ENCODE measurements at regions of chr6 and their contacts with region 1.

Region 1: DNA sequence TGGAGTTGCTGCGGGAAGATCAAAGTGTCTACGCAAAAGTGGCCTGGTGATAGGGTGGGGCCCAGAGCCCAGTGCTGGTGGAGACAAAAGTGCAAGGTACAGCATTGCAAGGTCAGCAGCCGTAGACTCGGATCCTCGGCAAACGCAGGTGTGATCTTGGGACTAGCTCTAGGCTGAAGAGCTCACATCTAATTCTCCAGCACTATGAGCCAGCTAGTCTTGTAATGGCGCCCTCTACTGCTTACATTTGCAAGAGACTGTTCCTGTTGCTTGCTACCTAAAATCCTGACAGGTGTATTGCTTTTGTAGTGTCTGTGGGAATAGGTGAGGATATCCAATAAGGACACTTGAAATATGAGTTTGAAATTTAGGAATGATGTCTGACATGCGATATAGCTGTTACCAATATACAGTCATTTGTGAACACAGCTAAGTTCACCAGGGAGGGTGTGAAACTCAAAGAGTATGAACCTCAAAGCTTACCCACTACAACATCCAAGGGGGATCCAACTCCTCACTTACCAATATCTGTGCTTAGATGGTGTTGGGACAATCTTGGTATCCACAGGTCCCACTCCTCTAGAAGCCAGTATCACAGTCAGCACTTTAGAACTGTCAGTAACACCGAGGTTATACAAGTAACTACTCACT is 58.4 kb downstream of the PDE7B start:
- DNase-seq: peak; percentile 57 to 73 (median 71)
- H3K4me3 ChIP-seq: no peak overlapping the region
- H3K4me3 Mint-ChIP-seq: no peak overlapping the region
- H3K27ac ChIP-seq: no peak overlapping the region
- H3K27ac Mint-ChIP-seq: no peak overlapping the region
- H3K4me1 ChIP-seq: no peaks in the 10 kb centered on the region
- H3K4me1 Mint-ChIP-seq: peaks cover 2 to 5% (median 4%) of the 10 kb centered on the region in 4 donors
- H3K27me3 ChIP-seq: no peaks in the 10 kb centered on the region
- H3K27me3 Mint-ChIP-seq: no peaks in the 10 kb centered on the region

Region 2: GRCh38 chr6:135506270-135506997 is 403.4 kb before region 1 on chr6:
- CTCF ChIA-PET with region 1: interaction called, 18 read pairs
- POLR2A ChIA-PET with region 1: no interaction called
- intact Hi-C with region 1: loop called (anchors 1 kb)
- DNase-seq: peak; percentile 39 to 46 (median 40)
- H3K4me3 ChIP-seq: no peak overlapping the region
- H3K4me3 Mint-ChIP-seq: peak overlapping the region in 3 of 8 donors; percentile 13 to 39 (median 20)
- H3K27ac ChIP-seq: no peak overlapping the region
- H3K27ac Mint-ChIP-seq: no peak overlapping the region
- H3K4me1 ChIP-seq: no peaks in the 10 kb centered on the region
- H3K4me1 Mint-ChIP-seq: peaks cover 0 to 5% (median under 1%) of the 10 kb centered on the region in 4 donors
- H3K27me3 ChIP-seq: no peaks in the 10 kb centered on the region
- H3K27me3 Mint-ChIP-seq: no peaks in the 10 kb centered on the region

Region 3: GRCh38 chr6:135548453-135548852 is 361.4 kb before region 1 on chr6:
- CTCF ChIA-PET with region 1: no interaction called
- POLR2A ChIA-PET with region 1: no interaction called
- intact Hi-C with region 1: no loop called
- DNase-seq: no peak
- H3K4me3 ChIP-seq: no peak overlapping the region
- H3K4me3 Mint-ChIP-seq: no peak overlapping the region
- H3K27ac ChIP-seq: no peak overlapping the region
- H3K27ac Mint-ChIP-seq: no peak overlapping the region
- H3K4me1 ChIP-seq: no peaks in the 10 kb centered on the region
- H3K4me1 Mint-ChIP-seq: no peaks in the 10 kb centered on the region
- H3K27me3 ChIP-seq: no peaks in the 10 kb centered on the region
- H3K27me3 Mint-ChIP-seq: peaks cover 0 to under 1% of the 10 kb centered on the region in 2 donors

Region 4: GRCh38 chr6:135675862-135676261 is 234.0 kb before region 1 on chr6:
- CTCF ChIA-PET with region 1: interaction called, 83 read pairs
- POLR2A ChIA-PET with region 1: no interaction called
- intact Hi-C with region 1: loop called (anchors 1 kb)
- DNase-seq: peak; percentile 36 to 50 (median 48)
- H3K4me3 ChIP-seq: no peak overlapping the region
- H3K4me3 Mint-ChIP-seq: no peak overlapping the region
- H3K27ac ChIP-seq: no peak overlapping the region
- H3K27ac Mint-ChIP-seq: peak overlapping the region in 1 of 7 donors; percentile 14
- H3K4me1 ChIP-seq: no peaks in the 10 kb centered on the region
- H3K4me1 Mint-ChIP-seq: no peaks in the 10 kb centered on the region
- H3K27me3 ChIP-seq: no peaks in the 10 kb centered on the region
- H3K27me3 Mint-ChIP-seq: no peaks in the 10 kb centered on the region

Region 5: DNA sequence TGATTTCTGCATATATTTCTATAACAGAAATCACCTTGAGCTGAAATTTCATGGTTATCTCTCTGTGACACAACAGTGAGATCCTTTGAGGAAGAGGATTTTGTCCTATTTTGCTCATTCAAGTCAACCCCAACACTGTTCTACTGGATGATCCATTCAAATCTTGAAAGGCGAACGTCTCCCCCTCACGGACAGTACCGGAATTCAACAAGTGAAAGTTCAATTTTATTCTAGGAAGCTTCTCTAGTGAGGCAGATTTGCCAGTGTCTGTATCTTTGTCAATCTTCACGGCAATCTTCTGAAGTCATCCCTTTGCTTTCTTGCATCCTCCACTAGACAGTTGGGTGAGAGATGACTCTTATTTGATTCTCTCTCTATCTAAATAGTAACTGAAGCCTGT is 150.0 kb before region 1 on chr6:
- CTCF ChIA-PET with region 1: interaction called, 12 read pairs
- POLR2A ChIA-PET with region 1: no interaction called
- intact Hi-C with region 1: no loop called
- DNase-seq: no peak
- H3K4me3 ChIP-seq: no peak overlapping the region
- H3K4me3 Mint-ChIP-seq: no peak overlapping the region
- H3K27ac ChIP-seq: no peak overlapping the region
- H3K27ac Mint-ChIP-seq: no peak overlapping the region
- H3K4me1 ChIP-seq: no peaks in the 10 kb centered on the region
- H3K4me1 Mint-ChIP-seq: no peaks in the 10 kb centered on the region
- H3K27me3 ChIP-seq: no peaks in the 10 kb centered on the region
- H3K27me3 Mint-ChIP-seq: no peaks in the 10 kb centered on the region

Region 6: DNA sequence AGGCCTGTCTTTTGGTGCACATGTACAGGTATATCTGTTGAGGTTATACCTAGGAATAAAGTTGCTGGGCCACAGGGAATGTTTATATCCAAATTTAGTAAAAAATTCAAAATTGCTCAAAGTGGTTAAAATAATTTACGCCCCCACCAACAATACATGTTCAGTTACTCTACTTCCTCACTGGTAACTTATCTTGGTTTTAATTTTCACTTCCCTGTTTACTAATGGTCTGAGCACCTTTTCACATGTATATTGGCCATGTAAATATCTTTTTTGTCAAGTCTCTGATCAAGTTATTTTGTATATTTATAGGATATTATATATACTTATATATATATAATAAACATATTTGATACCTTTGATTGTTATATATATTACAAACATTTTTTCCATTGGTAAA is 48.7 kb before region 1 on chr6:
- CTCF ChIA-PET with region 1: interaction called, 7 read pairs
- POLR2A ChIA-PET with region 1: no interaction called
- intact Hi-C with region 1: loop called (anchors 5 kb)
- DNase-seq: no peak
- H3K4me3 ChIP-seq: no peak overlapping the region
- H3K4me3 Mint-ChIP-seq: no peak overlapping the region
- H3K27ac ChIP-seq: no peak overlapping the region
- H3K27ac Mint-ChIP-seq: no peak overlapping the region
- H3K4me1 ChIP-seq: no peaks in the 10 kb centered on the region
- H3K4me1 Mint-ChIP-seq: no peaks in the 10 kb centered on the region
- H3K27me3 ChIP-seq: no peaks in the 10 kb centered on the region
- H3K27me3 Mint-ChIP-seq: no peaks in the 10 kb centered on the region

Region 7: DNA sequence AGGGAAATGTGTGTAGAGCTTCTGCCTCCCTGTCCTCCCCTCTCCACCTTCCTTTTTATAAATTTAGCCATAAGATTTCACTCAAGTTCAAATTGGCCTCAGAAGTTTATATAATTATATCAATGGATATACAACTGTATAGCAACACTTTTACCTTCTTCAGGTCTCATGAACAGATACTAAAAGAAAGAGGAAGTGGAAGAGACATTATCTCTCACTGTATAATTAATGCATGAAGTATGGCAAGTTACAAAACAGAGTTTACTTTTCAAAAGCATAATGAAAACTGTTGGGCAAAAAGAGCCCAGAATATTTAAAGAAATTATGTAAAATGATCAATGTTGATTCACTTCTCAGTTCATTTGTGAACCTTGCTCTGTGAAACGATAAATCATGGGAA is 41.3 kb after region 1 on chr6:
- CTCF ChIA-PET with region 1: no interaction called
- POLR2A ChIA-PET with region 1: no interaction called
- intact Hi-C with region 1: no loop called
- DNase-seq: no peak
- H3K4me3 ChIP-seq: no peak overlapping the region
- H3K4me3 Mint-ChIP-seq: no peak overlapping the region
- H3K27ac ChIP-seq: no peak overlapping the region
- H3K27ac Mint-ChIP-seq: no peak overlapping the region
- H3K4me1 ChIP-seq: no peaks in the 10 kb centered on the region
- H3K4me1 Mint-ChIP-seq: no peaks in the 10 kb centered on the region
- H3K27me3 ChIP-seq: no peaks in the 10 kb centered on the region
- H3K27me3 Mint-ChIP-seq: peaks cover 0 to 2% of the 10 kb centered on the region in 2 donors

Region 8: GRCh38 chr6:136031982-136032381 is 122.1 kb after region 1 on chr6:
- CTCF ChIA-PET with region 1: no interaction called
- POLR2A ChIA-PET with region 1: no interaction called
- intact Hi-C with region 1: no loop called
- DNase-seq: no peak
- H3K4me3 ChIP-seq: no peak overlapping the region
- H3K4me3 Mint-ChIP-seq: no peak overlapping the region
- H3K27ac ChIP-seq: no peak overlapping the region
- H3K27ac Mint-ChIP-seq: no peak overlapping the region
- H3K4me1 ChIP-seq: no peaks in the 10 kb centered on the region
- H3K4me1 Mint-ChIP-seq: no peaks in the 10 kb centered on the region
- H3K27me3 ChIP-seq: no peaks in the 10 kb centered on the region
- H3K27me3 Mint-ChIP-seq: peaks cover 0 to 5% of the 10 kb centered on the region in 2 donors

Region 9: GRCh38 chr6:136059308-136059707 is 149.4 kb after region 1 on chr6:
- CTCF ChIA-PET with region 1: no interaction called
- POLR2A ChIA-PET with region 1: no interaction called
- intact Hi-C with region 1: no loop called
- DNase-seq: no peak
- H3K4me3 ChIP-seq: no peak overlapping the region
- H3K4me3 Mint-ChIP-seq: no peak overlapping the region
- H3K27ac ChIP-seq: no peak overlapping the region
- H3K27ac Mint-ChIP-seq: no peak overlapping the region
- H3K4me1 ChIP-seq: no peaks in the 10 kb centered on the region
- H3K4me1 Mint-ChIP-seq: no peaks in the 10 kb centered on the region
- H3K27me3 ChIP-seq: no peaks in the 10 kb centered on the region
- H3K27me3 Mint-ChIP-seq: peaks cover 3 to 5% of the 10 kb centered on the region in 2 donors

Region 10: DNA sequence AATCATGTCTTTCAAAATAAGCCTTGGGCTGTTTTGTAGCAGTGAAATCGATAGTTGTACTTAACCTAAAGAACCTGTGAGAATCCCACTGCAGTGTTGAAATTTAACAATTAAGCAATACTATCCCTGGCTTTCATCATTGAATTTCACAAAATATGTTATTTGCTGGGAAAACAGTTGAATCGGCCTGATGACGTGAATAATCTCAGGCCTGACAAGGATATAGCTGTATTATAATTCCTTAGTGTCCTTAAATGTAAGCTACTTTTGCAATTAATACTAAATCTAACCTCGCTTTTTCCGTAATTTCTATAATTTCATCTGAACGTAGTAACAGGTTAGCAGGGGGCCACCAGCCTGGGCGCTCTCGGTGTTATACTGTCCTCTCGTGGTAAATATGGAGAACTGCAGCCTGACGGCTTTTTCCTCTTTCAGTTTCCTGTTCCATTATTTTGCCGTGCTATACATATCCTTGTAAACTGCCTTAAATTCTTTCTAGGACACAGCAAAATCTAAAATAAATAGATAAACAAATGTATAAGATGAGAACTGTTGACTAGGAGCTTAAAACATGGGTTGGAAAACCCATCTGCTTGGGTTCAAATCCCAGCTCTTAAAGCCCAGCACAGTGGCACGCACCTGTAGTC is 316.3 kb after region 1 on chr6:
- CTCF ChIA-PET with region 1: interaction called, 30 read pairs
- POLR2A ChIA-PET with region 1: interaction called, 3 read pairs
- intact Hi-C with region 1: loop called (anchors 1 kb)
- DNase-seq: peak in 4 of 5 donors; percentile 53 to 57 (median 55)
- H3K4me3 ChIP-seq: peak overlapping the region in 1 of 2 donors; percentile 29
- H3K4me3 Mint-ChIP-seq: peak overlapping the region in 7 of 8 donors; percentile 49 to 77 (median 66)
- H3K27ac ChIP-seq: no peak overlapping the region
- H3K27ac Mint-ChIP-seq: peak overlapping the region in 2 of 7 donors; percentile 2 to 72
- H3K4me1 ChIP-seq: no peaks in the 10 kb centered on the region
- H3K4me1 Mint-ChIP-seq: peaks cover 3 to 10% (median 4%) of the 10 kb centered on the region in 4 donors
- H3K27me3 ChIP-seq: no peaks in the 10 kb centered on the region
- H3K27me3 Mint-ChIP-seq: no peaks in the 10 kb centered on the region